Left cardiac atrium (tissue), 4 donors: ENCODE measurements at regions of chr16 and their contacts with region 1.

Region 1: GRCh38 chr16:15427648-15428239 is 6.6 kb upstream of the BMERB1 start:
- DNase-seq: peak; percentile 75
- ATAC-seq: peak; percentile 89 to 93

Region 2: DNA sequence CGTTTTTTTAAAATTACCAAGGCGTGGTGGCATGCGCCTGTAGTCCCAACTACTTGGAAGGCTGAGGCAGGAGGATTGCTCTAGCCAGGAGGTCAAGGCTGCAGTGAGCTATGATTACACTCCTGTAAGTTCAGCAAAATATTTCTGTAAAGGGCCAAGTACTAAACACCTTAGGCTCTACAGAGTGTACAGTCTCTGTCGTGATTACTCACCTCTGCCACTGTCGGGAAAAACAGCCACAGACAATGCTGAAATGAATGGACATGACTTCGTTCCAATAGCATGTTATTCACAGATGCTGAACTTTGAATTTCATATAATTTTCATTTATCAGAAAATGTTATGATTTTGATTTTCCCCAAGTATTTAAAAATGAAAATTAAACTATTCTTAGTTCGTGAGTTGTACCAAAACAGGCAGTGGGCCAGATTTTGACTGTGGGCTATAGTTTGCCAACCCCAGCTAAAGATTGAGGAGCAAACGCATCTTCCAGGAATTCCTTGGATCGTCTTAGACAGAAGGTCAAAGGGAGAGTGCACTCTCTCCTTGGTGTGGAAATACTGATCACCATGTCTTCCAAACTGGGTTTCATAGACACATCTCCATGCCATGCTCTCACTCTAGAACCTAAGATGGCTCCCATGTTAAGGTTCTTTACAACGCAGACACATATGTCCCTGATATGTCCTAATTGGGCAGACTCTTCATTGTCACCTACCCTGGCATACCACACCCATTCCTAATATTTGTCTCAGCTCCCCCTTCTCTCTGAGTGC is 125.8 kb after region 1 on chr16:
- intact Hi-C with region 1: loop called in 1 of 2 experiments (anchors 5 kb)
- DNase-seq: no peak
- ATAC-seq: no peak

Region 3: GRCh38 chr16:15643048-15643945 is 215.6 kb after region 1 on chr16 and contains the start of gene MARF1:
- intact Hi-C with region 1: loop called in 1 of 2 experiments (anchors 10 kb)
- DNase-seq: peak; percentile 99
- ATAC-seq: peak; percentile 99
- total RNA-seq, gene MARF1: 39.5 to 50.9 TPM

Region 4: GRCh38 chr16:15704545-15704987 is 276.8 kb after region 1 on chr16:
- intact Hi-C with region 1: loop called in 1 of 2 experiments (anchors 10 kb)
- DNase-seq: peak; percentile 78
- ATAC-seq: peak; percentile 70 to 82

Region 5: DNA sequence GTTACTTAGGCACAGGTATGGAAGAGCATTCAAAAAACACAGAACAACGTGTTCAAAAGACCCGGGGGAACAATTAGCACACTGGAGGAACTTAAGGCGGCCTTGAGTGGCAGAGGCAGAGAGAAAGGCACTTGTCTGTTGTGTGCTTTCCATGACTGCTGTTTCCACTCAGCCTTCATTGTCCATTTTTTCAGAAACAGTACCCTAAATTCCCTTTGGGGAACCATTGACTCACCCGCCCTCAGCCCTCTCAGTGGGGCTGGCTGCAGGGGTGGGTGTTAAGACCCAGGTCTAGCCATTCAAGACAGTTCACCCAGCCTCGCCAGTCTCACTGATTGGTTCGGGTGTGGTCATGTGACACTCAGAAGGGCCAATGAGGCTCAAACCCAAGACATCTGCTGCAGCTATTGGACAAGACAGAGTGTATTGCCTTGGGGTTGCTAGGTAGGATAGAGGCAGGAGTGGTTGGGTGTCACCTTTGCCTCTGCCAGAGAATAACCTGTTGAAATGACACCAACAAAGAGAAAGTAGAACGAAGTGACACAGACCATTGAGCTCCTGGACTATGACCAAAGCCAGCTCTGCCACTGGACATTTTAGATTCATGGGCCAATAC is 480.2 kb after region 1 on chr16:
- intact Hi-C with region 1: no loop called
- DNase-seq: no peak
- ATAC-seq: peak in 1 of 2 donors; percentile 49